Activated T-helper 1 cell treated with anti-CD3 and anti-CD28 coated beads, Interleukin-12 subunit alpha, Interleukin-12 subunit beta, Interleukin-2, Interleukin-4 antibody, amounts not matched to agents 30 ng/mL and 10 ng/mL and 1 ng/mL, durations not matched to agents 14 hours and 24 hours and 36 hours (primary cell): ENCODE measurements at regions of chr9 and their contacts with region 1.

Region 1: GRCh38 chr9:123338710-123339665 is 17.0 kb upstream of the CRB2 start:
- DNase-seq: peak; percentile 62
- H3K4me3 Mint-ChIP-seq: peak overlapping the region; percentile 83
- H3K27ac Mint-ChIP-seq: peak overlapping the region; percentile 93
- H3K4me1 Mint-ChIP-seq: peaks cover 40% of the 10 kb centered on the region
- H3K27me3 Mint-ChIP-seq: no peaks in the 10 kb centered on the region

Region 2: DNA sequence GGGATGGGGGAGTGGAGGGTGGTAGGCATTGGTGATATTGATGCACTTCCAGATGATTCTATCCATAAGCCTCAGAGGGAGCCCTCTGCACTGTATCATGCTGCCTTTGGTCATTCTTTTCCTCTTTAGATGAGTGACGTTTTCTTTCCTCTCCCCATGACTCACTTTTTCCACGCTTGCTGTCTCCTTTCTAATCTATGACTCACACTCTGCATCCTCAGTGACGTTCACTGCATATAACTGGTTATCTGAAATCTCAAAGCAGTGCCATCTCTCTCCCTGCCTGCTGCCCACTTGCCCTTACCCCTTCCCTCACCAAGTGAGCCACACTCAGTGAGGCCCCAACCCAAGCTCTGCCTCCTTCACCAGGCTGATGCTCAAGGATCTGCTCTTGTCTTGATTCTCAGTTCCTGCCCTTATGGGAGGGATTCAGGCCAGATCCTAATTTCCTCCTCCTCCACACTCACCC is 936.6 kb before region 1 on chr9:
- intact Hi-C with region 1: loop called (anchors 10 kb)
- DNase-seq: peak; percentile 33
- H3K4me3 Mint-ChIP-seq: peak overlapping the region; percentile 5
- H3K27ac Mint-ChIP-seq: peak overlapping the region; percentile 86
- H3K4me1 Mint-ChIP-seq: peaks cover 25% of the 10 kb centered on the region
- H3K27me3 Mint-ChIP-seq: peaks cover 6% of the 10 kb centered on the region

Region 3: GRCh38 chr9:122940603-122941559 is 398.1 kb before region 1 on chr9 and contains the start of gene RABGAP1:
- intact Hi-C with region 1: loop called (anchors 1 kb)
- DNase-seq: peak; percentile 97
- H3K4me3 Mint-ChIP-seq: peak within 1 kb of the TSS; percentile 98
- H3K27ac Mint-ChIP-seq: peak within 1 kb of the TSS; percentile 76
- H3K4me1 Mint-ChIP-seq: peaks cover 27% of the 10 kb centered on the region
- H3K27me3 Mint-ChIP-seq: peaks cover 1% of the 10 kb centered on the region
- total RNA-seq, gene RABGAP1: 26.6 and 30.2 TPM in 2 replicates

Region 4: DNA sequence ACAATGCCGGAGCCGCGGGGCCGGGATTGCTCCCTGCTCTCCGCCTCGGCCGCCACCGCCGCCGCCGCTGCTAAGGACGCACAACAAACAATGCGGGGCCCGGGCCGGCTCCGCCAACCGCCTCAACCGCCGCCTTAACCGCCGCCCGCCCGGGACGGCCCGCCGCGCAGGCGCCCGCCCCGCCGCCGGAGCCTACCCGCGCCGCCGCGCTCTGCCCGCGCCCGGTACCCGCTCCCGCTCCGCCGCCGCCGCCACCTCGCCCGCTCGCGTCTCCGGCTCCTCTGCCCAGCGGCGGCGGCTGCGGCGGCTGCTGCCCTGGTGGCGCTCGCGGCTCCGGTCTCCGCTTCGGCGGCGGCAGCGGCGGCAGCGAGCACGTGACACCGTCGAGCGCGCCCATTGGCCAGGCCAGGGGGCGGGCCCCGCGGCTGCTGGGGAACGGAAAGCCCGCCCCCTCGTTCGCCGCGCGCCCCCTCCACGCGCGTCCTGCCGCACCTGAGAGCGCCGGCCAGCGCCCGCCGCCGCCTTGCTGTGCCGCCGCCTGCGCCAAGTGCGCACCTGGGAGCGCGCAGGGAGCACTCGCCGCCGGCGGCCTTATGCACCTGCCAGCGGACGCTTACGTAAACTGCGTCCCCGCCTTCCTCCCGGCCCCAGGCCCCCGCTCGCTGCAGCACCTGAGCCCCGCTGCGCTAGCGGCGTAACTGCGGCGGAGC is 70.6 kb before region 1 on chr9 and contains the start of gene STRBP:
- intact Hi-C with region 1: loop called (anchors 1 kb)
- DNase-seq: peak; percentile 91
- H3K4me3 Mint-ChIP-seq: peak within 1 kb of the TSS; percentile 86
- H3K27ac Mint-ChIP-seq: peak within 1 kb of the TSS; percentile 53
- H3K4me1 Mint-ChIP-seq: peaks cover 6% of the 10 kb centered on the region
- H3K27me3 Mint-ChIP-seq: peaks cover 7% of the 10 kb centered on the region
- total RNA-seq, gene STRBP: 22.1 and 24.2 TPM in 2 replicates

Region 5: DNA sequence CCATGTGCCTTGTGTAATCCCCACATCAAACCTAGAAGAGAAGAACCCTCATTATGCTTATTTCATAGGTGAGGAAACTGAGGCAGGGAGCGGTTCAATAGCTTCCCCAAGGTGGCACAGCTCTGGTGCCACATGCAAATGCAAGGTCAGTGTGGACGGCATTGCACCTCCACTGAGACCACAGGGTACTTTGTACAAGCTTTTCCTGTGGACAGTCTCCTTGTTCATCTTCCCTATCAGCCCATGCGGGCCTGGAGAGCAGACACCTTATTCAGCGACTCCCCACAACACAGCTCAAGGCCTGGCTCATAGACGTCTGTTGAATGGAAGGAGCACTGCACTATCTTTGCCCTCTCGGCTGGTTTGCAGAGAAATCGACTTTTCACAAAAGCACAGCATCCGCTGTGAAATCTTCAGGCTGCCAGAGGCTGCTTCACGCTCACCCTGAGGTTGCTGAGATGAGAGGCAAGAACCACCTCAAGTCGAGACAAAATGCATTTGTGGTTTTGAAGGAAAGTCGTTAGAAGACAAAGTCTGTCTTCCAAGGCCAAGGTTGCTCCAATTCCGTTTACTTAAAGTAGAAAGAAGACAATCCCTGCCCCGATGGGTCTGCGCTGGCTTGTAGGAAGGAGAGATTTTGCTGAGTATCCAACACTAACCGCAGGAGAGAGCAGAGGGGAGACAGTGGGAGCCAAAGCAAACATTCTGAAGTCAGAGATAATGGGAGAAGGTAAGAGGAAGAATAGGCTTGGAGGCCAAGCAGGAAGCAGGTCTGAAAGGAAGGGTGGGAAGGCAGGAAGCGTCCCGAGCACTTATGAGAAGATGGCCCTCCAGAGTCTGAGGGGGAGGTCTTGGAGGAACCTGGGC is 36.4 kb before region 1 on chr9:
- intact Hi-C with region 1: loop called (anchors 1 kb)
- DNase-seq: peak; percentile 8
- H3K4me3 Mint-ChIP-seq: no peak overlapping the region
- H3K27ac Mint-ChIP-seq: peak overlapping the region; percentile 31
- H3K4me1 Mint-ChIP-seq: peaks cover 18% of the 10 kb centered on the region
- H3K27me3 Mint-ChIP-seq: no peaks in the 10 kb centered on the region

Region 6: GRCh38 chr9:123322273-123323195 is 16.5 kb before region 1 on chr9:
- intact Hi-C with region 1: loop called (anchors 1 kb)
- DNase-seq: peak; percentile 51
- H3K4me3 Mint-ChIP-seq: peak overlapping the region; percentile 70
- H3K27ac Mint-ChIP-seq: peak overlapping the region; percentile 80
- H3K4me1 Mint-ChIP-seq: peaks cover 37% of the 10 kb centered on the region
- H3K27me3 Mint-ChIP-seq: peaks cover 6% of the 10 kb centered on the region